ENCODE measurements at regions of chr3 and their contacts with region 1.

Region 1: DNA sequence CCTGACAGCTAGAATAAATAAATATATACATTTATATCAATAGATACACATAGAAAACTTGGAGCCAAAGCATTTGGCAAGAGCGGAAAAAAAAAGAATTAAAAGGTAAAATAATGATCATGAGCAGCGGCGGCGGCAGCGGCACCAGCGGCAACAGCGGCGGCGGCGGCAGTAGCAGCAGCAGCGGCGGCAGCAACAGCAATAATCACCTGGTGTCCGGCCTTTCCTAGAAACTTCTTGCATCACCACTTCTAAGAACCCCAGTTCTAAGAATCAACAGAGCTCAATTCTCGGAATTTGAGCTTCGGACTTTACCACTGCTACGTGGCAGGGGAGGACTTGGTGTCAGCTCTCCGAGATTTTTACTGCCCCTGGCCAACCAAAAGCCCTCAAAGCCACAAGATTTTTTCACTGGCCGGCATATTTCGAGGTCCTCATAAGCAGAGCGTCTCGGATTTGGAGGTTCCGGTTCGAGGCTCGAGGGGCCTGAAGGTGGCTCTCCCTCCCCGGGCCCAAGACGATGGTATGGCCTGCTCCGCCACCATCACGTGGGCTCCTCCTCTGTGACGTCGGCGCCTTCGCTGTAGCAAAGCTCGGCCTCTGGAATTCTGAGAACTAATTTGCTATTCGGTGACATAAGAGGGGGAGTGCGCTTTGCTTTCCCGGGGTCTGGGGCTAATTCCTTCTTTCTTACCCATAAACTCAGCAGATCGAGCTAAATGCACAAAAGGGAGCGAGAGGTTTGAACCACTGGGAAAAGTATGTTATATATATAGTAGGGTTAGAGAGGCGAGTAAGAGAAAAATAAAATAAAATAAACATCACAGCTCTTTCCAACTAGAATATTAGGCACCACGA is at the start of gene BCL6:
- DNase-seq: peak; percentile 97
- total RNA-seq, gene BCL6: 67.4 TPM

Region 2: DNA sequence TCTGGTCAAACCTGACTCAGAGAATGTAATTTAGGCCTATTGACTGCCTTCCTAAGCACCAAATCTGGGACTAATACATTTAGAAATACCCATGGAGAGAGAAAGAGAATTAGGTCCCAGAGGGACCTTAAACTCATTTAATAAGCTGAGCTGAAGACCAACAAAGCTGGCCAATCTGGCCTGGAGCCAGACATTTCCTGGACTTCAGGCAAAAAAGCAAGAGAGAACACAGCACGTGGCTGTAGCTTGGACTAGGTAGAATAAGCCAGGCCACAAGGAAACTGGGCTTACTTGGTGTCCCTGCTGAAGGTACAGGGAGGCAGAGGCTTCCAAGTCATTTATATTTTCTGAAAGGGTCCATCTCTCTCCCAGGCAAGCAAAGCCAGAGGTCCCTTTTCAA is 289.2 kb before region 1 on chr3:
- intact Hi-C with region 1: no loop called
- DNase-seq: no peak

Region 3: GRCh38 chr3:187640569-187641059 is 104.8 kb before region 1 on chr3:
- intact Hi-C with region 1: no loop called
- DNase-seq: no peak

Region 4: GRCh38 chr3:187946163-187946691 is 200.8 kb after region 1 on chr3:
- intact Hi-C with region 1: loop called (anchors 2 kb)
- DNase-seq: no peak

Region 5: GRCh38 chr3:187986514-187986934 is 241.1 kb after region 1 on chr3:
- intact Hi-C with region 1: loop called (anchors 2 kb)
- DNase-seq: no peak

Region 6: DNA sequence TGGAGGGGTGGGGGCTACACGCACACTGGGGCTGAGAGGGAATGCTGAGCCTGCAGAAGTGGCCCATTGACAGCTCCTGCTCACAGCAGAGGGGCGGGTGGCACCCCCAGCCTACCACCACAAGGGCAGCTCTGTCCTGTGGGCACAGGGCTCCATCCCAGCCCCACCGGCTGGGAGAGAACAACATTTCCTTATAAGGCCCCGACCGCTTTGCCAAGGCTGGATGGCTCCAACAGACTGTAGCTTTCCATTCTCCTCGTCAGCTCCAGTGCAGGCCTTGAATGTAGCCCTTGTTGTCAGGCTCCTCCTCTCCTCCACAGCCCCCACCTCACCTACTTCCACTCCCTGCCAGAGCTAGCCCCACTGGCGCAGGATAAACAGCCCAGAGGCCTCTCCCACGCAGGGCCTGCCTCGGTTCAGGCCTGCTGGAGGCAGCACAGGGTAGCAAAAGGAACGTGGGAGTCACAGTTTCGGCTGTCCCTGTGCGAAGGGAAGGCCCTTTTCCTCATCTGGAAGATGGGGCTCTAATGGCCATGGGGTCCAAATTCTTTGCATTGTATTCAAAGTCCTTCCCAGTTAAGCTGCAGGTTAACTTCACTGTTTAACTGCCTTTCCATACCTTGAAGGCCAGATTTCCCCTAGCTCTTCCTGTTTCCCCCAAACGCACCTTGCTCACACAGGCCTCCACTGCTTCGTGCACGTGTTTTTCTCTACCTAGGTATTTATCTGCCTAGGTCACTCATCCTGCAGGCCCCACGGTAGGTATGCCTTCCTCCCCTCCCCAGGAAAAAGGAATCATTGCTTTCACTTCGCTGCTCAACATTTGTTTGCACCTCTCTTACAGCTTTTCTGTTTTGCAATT is 307.0 kb after region 1 on chr3:
- intact Hi-C with region 1: loop called (anchors 2 kb)
- DNase-seq: peak; percentile 87

Region 7: DNA sequence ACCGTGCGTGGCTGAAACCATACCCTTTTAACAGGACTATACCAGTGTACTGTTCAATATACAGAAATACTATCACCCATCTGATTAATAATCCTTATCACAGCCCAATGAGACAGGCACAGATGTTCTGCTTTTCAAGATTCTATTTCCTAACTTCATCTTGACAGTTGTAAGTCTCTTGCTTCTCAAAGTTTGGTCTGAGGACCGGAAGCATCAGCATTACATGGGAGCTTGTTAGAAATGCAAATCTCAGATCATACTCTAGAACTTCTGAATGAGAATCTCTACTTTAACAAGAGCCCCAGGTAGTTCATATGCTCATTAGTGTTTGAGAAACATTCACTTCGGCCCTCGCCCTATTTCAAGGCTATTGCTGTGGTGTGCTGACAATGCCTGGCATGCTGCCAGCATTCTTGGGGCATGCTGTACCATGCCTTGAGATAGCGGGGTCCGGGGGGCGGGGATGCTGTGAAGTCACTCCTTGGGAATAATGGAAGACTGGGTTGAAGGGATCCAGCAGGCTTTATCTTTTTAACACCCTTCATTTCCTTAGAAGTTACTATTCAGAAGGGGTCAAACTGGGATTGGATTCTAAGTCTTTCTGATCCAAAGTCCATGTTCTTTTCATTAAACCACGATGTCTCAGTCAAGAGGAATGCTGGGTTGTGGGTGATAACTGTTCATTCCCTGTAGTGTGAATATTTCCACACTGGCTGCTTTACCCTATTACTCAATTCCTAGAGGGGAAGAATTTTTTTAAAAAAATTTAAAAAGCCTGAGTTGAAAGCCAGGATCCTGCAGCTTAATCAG is 603.2 kb after region 1 on chr3:
- intact Hi-C with region 1: loop called (anchors 5 kb)
- DNase-seq: no peak

Measured in cardiac septum (tissue), 1 donor.